ENCODE measurements at regions of chr1 and their contacts with region 1.

Region 1: GRCh38 chr1:226062558-226063223 is at the start of gene H3-3A:
- DNase-seq: peak; percentile 98
- H3K4me3 ChIP-seq: peak within 1 kb of the TSS; percentile 84 to 90
- H3K27ac ChIP-seq: peak within 1 kb of the TSS; percentile 99 to 100
- H3K4me1 ChIP-seq: peaks cover 4% of the 10 kb centered on the region
- H3K27me3 ChIP-seq: no peaks in the 10 kb centered on the region
- CTCF ChIP-seq: peak in 3 of 4 experiments; percentile 11 to 49 (median 43)
- POLR2A ChIP-seq: peak; percentile 98
- total RNA-seq, gene H3-3A: 400 to 481 TPM

Region 2: GRCh38 chr1:225428068-225428880 is 634.4 kb before region 1 on chr1:
- intact Hi-C with region 1: loop called (anchors 10 kb)
- DNase-seq: peak; percentile 93
- H3K4me3 ChIP-seq: peak overlapping the region; percentile 80 to 91
- H3K27ac ChIP-seq: peak overlapping the region; percentile 89 to 92
- H3K4me1 ChIP-seq: peaks cover 5% of the 10 kb centered on the region
- H3K27me3 ChIP-seq: no peaks in the 10 kb centered on the region
- CTCF ChIP-seq: no peak
- POLR2A ChIP-seq: peak; percentile 82

Region 3: DNA sequence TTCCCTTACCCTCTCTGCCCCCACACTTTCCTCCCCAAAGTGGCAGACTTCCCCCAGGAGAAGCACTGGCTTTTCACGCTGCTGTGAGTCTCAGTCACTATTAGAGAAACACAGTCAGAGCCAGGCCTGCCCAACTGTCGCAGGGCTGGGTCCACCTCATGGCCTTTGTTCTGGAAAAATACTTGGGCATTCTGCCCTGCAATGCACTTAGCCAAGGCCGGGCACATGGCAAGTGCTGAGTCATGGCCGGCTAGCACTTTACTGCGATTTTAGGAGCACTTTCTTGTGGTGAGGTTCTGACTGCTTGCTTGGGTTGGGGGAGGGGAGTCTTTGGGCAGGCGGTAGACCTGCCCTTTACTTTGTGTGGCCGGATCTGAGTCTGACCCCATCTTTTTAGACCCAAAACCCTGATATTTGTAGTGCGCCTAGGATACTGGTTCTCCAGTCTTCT is 245.1 kb before region 1 on chr1:
- intact Hi-C with region 1: no loop called
- DNase-seq: peak; percentile 86
- H3K4me3 ChIP-seq: no peak overlapping the region
- H3K27ac ChIP-seq: peak overlapping the region; percentile 66 to 82
- H3K4me1 ChIP-seq: peaks cover 14% of the 10 kb centered on the region
- H3K27me3 ChIP-seq: no peaks in the 10 kb centered on the region
- CTCF ChIP-seq: no peak
- POLR2A ChIP-seq: peak; percentile 40

Region 4: DNA sequence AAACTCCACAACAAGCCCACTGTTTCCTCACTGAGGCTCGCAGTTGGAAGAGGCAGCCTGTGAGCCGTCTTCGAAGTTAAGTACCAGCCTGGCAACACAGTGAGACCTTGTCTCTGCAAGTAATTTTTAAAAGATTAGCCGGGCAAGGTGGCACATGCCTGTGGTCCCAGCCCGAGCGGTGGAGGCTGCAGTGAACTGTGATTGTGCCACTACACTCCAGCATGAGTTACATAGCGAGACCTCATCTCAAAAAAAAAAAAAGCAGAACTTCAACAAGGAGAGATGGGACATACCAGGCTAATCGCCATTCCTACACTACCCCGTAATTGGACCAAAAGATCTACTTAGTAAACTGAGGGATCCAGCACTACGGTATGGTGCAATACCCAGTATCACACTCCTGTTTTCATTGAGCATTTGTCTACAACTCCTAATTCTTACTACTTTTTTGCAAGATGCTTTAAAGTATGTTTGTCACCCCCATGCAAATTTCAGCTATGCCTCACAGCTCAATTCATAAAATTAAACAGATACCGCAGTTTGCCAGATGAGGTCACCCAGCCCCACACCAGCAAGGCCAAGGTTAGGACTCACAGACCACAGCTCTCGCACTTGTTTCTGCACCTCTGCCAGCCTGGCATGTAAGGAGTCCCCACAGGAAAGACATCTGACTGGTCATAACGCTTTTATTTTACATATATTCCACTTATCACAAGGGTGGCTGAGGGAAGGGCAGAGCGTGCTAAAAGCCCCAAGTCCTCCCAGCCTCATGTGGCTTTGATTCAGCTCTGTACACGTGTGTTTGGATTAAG is 84.5 kb before region 1 on chr1:
- intact Hi-C with region 1: no loop called
- DNase-seq: no peak
- H3K4me3 ChIP-seq: no peak overlapping the region
- H3K27ac ChIP-seq: no peak overlapping the region
- H3K4me1 ChIP-seq: peaks cover 6% of the 10 kb centered on the region
- H3K27me3 ChIP-seq: no peaks in the 10 kb centered on the region
- CTCF ChIP-seq: no peak
- POLR2A ChIP-seq: no peak

Region 5: GRCh38 chr1:225999227-225999911 is 63.3 kb before region 1 on chr1 and contains the start of gene SDE2:
- intact Hi-C with region 1: loop called (anchors 2 kb)
- DNase-seq: peak; percentile 99
- H3K4me3 ChIP-seq: peak within 1 kb of the TSS; percentile 66
- H3K27ac ChIP-seq: peak within 1 kb of the TSS; percentile 90 to 93
- H3K4me1 ChIP-seq: peaks cover 12% of the 10 kb centered on the region
- H3K27me3 ChIP-seq: no peaks in the 10 kb centered on the region
- CTCF ChIP-seq: peak in 1 of 4 experiments; percentile 6
- POLR2A ChIP-seq: peak; percentile 87
- total RNA-seq, gene SDE2: 19.9 to 24.8 TPM

Region 6: DNA sequence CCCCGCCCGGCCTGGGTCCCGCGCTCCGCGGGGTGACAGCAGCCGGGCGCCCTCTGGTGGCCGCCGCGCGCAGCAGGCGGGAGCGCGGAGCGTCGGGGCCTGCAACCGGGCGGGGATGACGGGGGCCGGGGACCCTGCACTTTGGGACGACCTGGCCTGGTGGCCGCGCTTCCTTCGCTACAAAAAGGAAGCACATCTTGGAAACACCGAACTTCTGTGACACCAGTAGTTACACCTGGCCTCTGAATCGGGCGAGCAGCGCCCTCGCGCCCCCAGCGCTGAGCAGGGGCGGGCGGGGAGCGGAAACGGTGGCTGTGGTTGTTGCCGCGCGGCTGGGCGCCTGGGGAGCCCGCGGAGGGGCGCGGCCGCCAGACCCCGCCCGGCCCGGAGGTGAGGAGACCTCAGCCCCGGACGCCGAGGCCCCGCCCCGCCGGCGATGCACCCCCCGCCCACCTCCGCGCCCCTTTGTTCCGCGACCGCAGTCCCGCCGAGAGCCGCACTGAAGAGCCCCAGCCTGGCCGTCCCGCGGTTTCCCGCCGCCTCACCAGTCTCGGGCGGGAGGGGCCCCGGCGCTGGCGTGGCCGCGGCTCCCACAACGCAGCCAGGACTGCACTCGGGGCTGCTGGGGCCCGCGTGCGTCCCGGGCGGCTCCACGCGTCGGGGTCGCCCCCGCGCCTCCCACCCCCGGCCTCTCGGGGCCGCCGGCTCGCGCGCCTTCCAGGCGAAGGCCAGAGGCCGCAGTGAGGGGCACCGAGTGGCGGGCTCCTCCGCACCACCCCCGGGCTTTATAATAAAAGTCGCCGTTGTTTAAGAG is 59.1 kb after region 1 on chr1:
- intact Hi-C with region 1: loop called (anchors 2 kb)
- DNase-seq: peak; percentile 60
- H3K4me3 ChIP-seq: peak overlapping the region; percentile 53 to 54
- H3K27ac ChIP-seq: peak overlapping the region; percentile 83 to 85
- H3K4me1 ChIP-seq: no peaks in the 10 kb centered on the region
- H3K27me3 ChIP-seq: no peaks in the 10 kb centered on the region
- CTCF ChIP-seq: peak; percentile 72 to 99 (median 95)
- POLR2A ChIP-seq: no peak

Measured in prostate gland (tissue), 2 donors.